Naive thymus-derived CD4-positive, alpha-beta T cell (primary cell): ENCODE measurements at regions of chr6 and their contacts with region 1.

Region 1: DNA sequence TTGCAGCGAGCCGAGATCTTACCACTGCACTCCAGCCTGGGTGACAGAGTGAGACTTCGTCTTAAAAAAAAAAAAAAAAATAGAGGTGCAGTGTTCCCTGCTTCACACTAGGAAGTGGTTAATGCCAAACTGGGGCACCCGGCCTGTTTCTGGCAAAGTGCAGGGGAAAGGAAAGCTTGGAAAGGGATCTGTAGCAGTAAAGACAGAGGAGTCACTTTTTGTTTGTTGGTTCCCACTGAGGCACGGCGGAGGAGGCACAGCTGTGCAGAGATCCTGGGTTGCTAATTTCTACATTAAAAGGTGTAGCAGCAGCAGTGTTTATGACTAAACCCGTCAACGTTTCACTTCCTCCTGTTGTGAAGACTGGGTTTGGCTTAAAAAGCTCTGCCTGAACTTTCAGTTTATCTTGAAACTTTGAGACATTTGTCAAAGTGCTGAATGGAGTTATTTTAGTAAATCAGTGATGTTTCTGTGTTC is 125.6 kb downstream of the CARMIL1 start:
- DNase-seq: peak; percentile 12 to 74 (median 56)
- ATAC-seq: peak; percentile 90
- H3K4me3 ChIP-seq: peak overlapping the region; percentile 44
- H3K4me3 Mint-ChIP-seq: peak overlapping the region in 1 of 10 donors; percentile 81
- H3K27ac ChIP-seq: peak overlapping the region; percentile 71
- H3K27ac Mint-ChIP-seq: no peak overlapping the region
- H3K4me1 ChIP-seq: peaks cover 16 to 41% of the 10 kb centered on the region in 2 donors
- H3K4me1 Mint-ChIP-seq: peaks cover 3 to 39% (median 26%) of the 10 kb centered on the region in 7 donors
- H3K27me3 ChIP-seq: no peaks in the 10 kb centered on the region
- H3K27me3 Mint-ChIP-seq: no peaks in the 10 kb centered on the region

Region 2: DNA sequence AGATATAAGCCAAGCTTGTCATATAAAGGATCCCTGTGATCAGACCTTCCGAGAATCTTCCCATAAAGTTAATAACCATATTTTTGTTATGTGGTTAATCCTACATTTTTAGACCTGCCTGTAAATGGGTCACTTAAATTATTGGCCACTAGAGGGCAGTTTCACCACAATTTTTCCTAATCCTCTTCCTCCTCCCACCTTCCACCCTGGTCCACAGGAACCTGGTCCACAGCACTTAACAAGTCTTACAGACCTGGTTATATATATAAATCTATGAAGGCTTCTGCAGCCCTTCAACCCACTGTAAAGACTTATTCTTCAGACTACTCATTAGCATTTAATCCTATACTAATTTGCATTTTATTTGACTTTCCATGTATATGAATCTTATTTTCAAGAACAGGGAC is 973.7 kb before region 1 on chr6:
- CTCF ChIA-PET with region 1: no interaction called
- POLR2A ChIA-PET with region 1: no interaction called
- intact Hi-C with region 1: no loop called
- DNase-seq: peak in 7 of 9 donors; percentile 4 to 41 (median 28)
- ATAC-seq: peak; percentile 46
- H3K4me3 ChIP-seq: no peak overlapping the region
- H3K4me3 Mint-ChIP-seq: no peak overlapping the region
- H3K27ac ChIP-seq: no peak overlapping the region
- H3K27ac Mint-ChIP-seq: no peak overlapping the region
- H3K4me1 ChIP-seq: no peaks in the 10 kb centered on the region
- H3K4me1 Mint-ChIP-seq: no peaks in the 10 kb centered on the region
- H3K27me3 ChIP-seq: no peaks in the 10 kb centered on the region
- H3K27me3 Mint-ChIP-seq: no peaks in the 10 kb centered on the region

Region 3: GRCh38 chr6:25278914-25279747 is 125.6 kb before region 1 on chr6 and contains the start of gene CARMIL1:
- CTCF ChIA-PET with region 1: interaction called, 9 read pairs
- POLR2A ChIA-PET with region 1: interaction called, 9 read pairs
- intact Hi-C with region 1: loop called (anchors 2 to 5 kb)
- DNase-seq: peak; percentile 46 to 76 (median 70)
- ATAC-seq: peak; percentile 84
- H3K4me3 ChIP-seq: peak within 1 kb of the TSS; percentile 64
- H3K4me3 Mint-ChIP-seq: peak within 1 kb of the TSS; percentile 88 to 98 (median 94)
- H3K27ac ChIP-seq: peak within 1 kb of the TSS; percentile 77
- H3K27ac Mint-ChIP-seq: peak within 1 kb of the TSS; percentile 74 to 94 (median 90)
- H3K4me1 ChIP-seq: peaks cover 14 to 15% of the 10 kb centered on the region in 2 donors
- H3K4me1 Mint-ChIP-seq: peaks cover 19 to 62% (median 41%) of the 10 kb centered on the region in 7 donors
- H3K27me3 ChIP-seq: no peaks in the 10 kb centered on the region
- H3K27me3 Mint-ChIP-seq: peaks cover 0 to 16% (median 6%) of the 10 kb centered on the region in 5 donors
- total RNA-seq, gene CARMIL1: 3.3 to 12.8 (median 10.4) TPM

Region 4: DNA sequence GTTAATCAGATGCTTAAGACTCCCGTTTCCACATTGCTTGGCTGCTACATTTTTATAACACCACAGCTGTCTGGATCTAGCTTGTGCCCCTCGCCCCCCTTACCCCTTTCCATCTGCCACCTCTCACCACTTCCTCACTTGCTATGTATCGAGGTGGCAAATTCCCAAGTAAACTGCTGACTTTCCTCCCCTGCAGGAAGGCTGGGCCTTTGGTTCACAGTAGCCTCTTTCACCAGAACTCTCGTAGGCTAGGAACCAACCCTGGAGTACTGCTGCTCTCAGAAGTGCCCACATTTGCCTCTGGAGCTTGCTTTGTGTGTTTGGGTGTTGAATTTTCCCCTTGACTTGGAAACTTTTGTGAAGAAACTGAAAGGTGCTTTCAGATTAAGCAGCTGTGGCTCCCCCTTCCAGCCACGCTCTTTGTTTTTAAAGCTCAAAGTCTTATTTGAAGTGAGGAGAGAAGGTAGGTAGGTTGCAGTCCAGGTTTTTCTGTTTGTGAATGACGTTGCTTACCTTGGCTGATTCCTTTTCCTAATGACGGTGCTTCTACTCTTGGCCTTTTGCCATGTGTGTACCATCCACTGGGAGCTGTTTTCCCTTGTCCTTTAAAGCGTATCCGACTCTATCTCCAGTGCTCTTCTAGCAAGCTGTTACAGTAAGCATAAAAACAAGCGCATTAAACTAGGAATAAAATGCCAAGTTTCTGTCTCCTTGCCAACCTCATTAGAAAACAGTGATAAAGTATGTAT is 35.1 kb before region 1 on chr6:
- CTCF ChIA-PET with region 1: interaction called, 30 read pairs
- POLR2A ChIA-PET with region 1: interaction called, 88 read pairs
- intact Hi-C with region 1: loop called (anchors 1 kb)
- DNase-seq: peak in 8 of 9 donors; percentile 34 to 67 (median 50)
- ATAC-seq: peak; percentile 52
- H3K4me3 ChIP-seq: peak overlapping the region; percentile 14
- H3K4me3 Mint-ChIP-seq: peak overlapping the region; percentile 79 to 97 (median 91)
- H3K27ac ChIP-seq: peak overlapping the region; percentile 80
- H3K27ac Mint-ChIP-seq: peak overlapping the region; percentile 82 to 100 (median 99)
- H3K4me1 ChIP-seq: peaks cover 18 to 46% of the 10 kb centered on the region in 2 donors
- H3K4me1 Mint-ChIP-seq: peaks cover 43 to 100% (median 96%) of the 10 kb centered on the region in 7 donors
- H3K27me3 ChIP-seq: no peaks in the 10 kb centered on the region
- H3K27me3 Mint-ChIP-seq: no peaks in the 10 kb centered on the region

Region 5: DNA sequence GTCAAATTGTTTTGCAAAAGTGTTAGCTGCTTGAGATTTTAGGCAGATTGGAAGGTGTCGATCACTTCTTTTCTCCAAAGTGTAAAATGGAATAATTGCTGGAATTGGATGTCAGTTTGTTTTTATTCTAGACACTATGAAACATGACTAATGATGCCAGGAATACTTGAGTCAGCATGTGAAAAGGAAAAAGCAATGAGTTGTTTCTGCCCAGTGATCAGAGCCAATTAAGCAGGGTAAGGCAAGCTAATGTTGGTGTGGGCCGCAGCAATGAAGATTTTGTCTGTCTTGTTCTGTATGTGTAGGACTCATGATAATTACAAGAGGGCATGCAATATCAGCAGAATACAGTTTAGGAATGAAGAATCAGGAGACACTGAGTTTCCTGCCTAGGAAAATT is 15.3 kb before region 1 on chr6:
- CTCF ChIA-PET with region 1: no interaction called
- POLR2A ChIA-PET with region 1: interaction called, 5 read pairs
- intact Hi-C with region 1: loop called in 1 of 2 experiments (anchors 2 kb)
- DNase-seq: no peak
- ATAC-seq: no peak
- H3K4me3 ChIP-seq: no peak overlapping the region
- H3K4me3 Mint-ChIP-seq: no peak overlapping the region
- H3K27ac ChIP-seq: no peak overlapping the region
- H3K27ac Mint-ChIP-seq: peak overlapping the region in 1 of 9 donors; percentile 31
- H3K4me1 ChIP-seq: no peaks in the 10 kb centered on the region
- H3K4me1 Mint-ChIP-seq: peaks cover 16 to 55% (median 44%) of the 10 kb centered on the region in 7 donors
- H3K27me3 ChIP-seq: no peaks in the 10 kb centered on the region
- H3K27me3 Mint-ChIP-seq: no peaks in the 10 kb centered on the region

Region 6: DNA sequence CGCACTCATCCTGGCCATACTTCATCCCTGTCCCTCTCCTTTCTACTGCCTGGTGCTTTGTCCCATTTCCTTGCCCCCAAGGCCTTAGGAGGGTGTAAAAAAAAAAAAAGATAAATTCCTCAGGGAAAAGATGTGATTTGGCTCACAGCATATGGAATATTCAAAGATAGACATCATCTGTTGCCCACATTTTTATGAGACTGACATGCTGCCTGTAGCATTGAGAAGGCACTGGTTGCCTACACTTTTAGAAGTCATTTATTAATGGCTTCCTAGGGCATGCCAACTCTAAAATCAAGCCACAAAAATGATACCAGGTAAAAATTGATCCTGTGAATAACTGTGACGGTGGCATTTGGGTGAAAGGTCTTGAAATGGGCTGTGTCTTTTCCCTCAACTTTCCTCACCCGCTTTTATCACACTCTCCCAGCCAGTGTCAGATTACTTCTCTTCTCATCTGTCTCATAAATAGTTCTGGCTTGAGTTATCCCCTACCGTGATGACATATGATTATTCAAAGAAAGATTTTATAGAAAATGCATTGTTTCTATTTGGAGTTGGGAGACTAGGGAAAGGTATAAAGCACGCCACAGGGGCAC is 13.8 kb after region 1 on chr6:
- CTCF ChIA-PET with region 1: no interaction called
- POLR2A ChIA-PET with region 1: interaction called, 10 read pairs
- intact Hi-C with region 1: no loop called
- DNase-seq: no peak
- ATAC-seq: no peak
- H3K4me3 ChIP-seq: no peak overlapping the region
- H3K4me3 Mint-ChIP-seq: no peak overlapping the region
- H3K27ac ChIP-seq: no peak overlapping the region
- H3K27ac Mint-ChIP-seq: peak overlapping the region in 1 of 9 donors; percentile 26
- H3K4me1 ChIP-seq: peaks cover 0 to 4% of the 10 kb centered on the region in 2 donors
- H3K4me1 Mint-ChIP-seq: peaks cover 5 to 68% (median 41%) of the 10 kb centered on the region in 7 donors
- H3K27me3 ChIP-seq: no peaks in the 10 kb centered on the region
- H3K27me3 Mint-ChIP-seq: peaks cover 0 to 3% (median 0%) of the 10 kb centered on the region in 5 donors

Region 7: GRCh38 chr6:25426901-25427300 is 22.2 kb after region 1 on chr6:
- CTCF ChIA-PET with region 1: no interaction called
- POLR2A ChIA-PET with region 1: interaction called, 10 read pairs
- intact Hi-C with region 1: loop called in 1 of 2 experiments (anchors 2 kb)
- DNase-seq: no peak
- ATAC-seq: no peak
- H3K4me3 ChIP-seq: no peak overlapping the region
- H3K4me3 Mint-ChIP-seq: no peak overlapping the region
- H3K27ac ChIP-seq: no peak overlapping the region
- H3K27ac Mint-ChIP-seq: no peak overlapping the region
- H3K4me1 ChIP-seq: no peaks in the 10 kb centered on the region
- H3K4me1 Mint-ChIP-seq: peaks cover 0 to 42% (median 14%) of the 10 kb centered on the region in 7 donors
- H3K27me3 ChIP-seq: no peaks in the 10 kb centered on the region
- H3K27me3 Mint-ChIP-seq: no peaks in the 10 kb centered on the region

Region 8: DNA sequence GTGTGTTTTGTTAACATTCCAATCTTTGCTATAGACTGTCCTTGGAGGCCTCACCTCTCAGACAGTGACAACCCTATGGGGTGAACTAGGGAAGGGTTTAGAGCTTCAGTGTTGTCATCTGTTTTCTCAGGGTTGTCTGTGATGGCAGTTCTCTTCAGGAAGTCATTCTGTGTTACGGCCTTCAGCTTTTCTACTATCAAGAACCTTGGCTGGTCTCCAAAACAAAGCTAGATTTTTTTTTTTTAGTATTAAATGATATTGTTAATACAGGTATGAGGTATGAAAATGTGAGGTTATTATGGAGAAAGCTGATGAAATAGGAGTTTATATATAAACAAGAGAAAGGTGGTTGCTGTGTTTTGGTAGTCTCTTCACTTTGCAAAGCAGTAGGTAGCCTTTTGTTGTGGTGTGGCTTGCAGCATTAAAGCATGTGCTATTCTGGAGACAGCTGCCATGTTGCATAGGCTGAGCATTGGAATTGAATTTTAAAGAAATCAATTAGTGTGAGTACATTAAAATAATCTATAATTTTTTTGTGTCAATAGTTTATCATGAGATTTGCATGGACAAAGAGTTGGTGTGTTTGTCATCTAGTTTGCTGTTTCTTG is 37.0 kb after region 1 on chr6:
- CTCF ChIA-PET with region 1: interaction called, 4 read pairs
- POLR2A ChIA-PET with region 1: interaction called, 31 read pairs
- intact Hi-C with region 1: loop called in 1 of 2 experiments (anchors 1 kb)
- DNase-seq: peak in 7 of 9 donors; percentile 49 to 75 (median 64)
- ATAC-seq: peak; percentile 84
- H3K4me3 ChIP-seq: no peak overlapping the region
- H3K4me3 Mint-ChIP-seq: peak overlapping the region in 7 of 10 donors; percentile 31 to 83 (median 49)
- H3K27ac ChIP-seq: peak overlapping the region; percentile 70
- H3K27ac Mint-ChIP-seq: peak overlapping the region in 4 of 9 donors; percentile 69 to 95 (median 86)
- H3K4me1 ChIP-seq: peaks cover 0 to 30% of the 10 kb centered on the region in 2 donors
- H3K4me1 Mint-ChIP-seq: peaks cover 6 to 37% (median 14%) of the 10 kb centered on the region in 7 donors
- H3K27me3 ChIP-seq: no peaks in the 10 kb centered on the region
- H3K27me3 Mint-ChIP-seq: no peaks in the 10 kb centered on the region